Left ventricle myocardium superior (tissue), 1 donor: ENCODE measurements at regions of chr7 and their contacts with region 1.

Region 1: GRCh38 chr7:33744293-33745075 is 160.9 kb upstream of the BMPER start:
- DNase-seq: no peak
- ATAC-seq: peak; percentile 36

Region 2: GRCh38 chr7:33243319-33243881 is 501.1 kb before region 1 on chr7:
- intact Hi-C with region 1: loop called (anchors 10 kb)
- DNase-seq: no peak
- ATAC-seq: peak; percentile 41

Region 3: GRCh38 chr7:33459340-33459751 is 285.1 kb before region 1 on chr7:
- intact Hi-C with region 1: loop called (anchors 10 kb)
- DNase-seq: no peak
- ATAC-seq: peak; percentile 83